Naive thymus-derived CD4-positive, alpha-beta T cell (primary cell): ENCODE measurements at regions of chr6 and their contacts with region 1.

Region 1: DNA sequence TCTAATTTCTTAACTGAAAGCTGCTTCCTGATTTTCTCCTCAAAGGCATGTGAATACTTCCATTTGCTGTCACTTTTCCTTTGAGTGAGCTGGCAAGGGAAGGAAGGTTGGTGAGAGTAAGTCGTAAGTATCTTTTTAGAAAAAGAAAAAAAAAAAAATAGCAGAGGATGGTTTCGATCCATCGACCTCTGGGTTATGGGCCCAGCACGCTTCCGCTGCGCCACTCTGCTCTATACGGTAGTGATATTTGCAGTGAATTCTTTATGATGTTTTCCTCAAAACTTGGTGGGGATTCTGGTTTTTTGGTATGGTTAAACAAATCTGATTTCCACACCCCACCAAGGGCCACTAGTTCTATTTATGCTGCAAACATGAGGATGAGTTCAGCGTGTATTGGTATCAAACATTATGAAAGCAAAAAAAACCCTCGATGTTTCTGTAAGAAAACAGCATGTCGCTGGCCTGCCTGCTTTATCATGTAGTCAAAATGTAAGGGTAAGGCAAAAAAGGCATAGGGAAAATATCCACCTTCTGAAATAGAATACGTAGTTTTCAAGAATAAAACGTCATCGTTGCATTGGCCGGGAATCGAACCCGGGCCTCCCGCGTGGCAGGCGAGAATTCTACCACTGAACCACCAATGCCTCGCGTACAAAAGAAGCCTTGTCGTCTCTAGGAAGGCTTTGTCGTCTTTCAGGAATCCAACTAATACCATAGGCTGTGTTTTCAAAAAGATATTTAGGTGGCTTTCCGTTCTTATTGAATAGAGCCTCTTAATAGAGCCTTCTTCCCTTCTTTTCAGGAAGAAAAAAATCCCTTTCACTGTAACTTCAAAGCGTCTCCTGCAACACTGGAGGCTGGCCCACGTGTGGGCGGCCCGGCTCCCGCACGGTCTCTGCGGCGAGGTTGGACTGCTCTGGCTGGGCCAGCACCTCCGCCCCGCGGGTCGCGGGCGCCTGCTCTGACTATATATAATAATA is 9.6 kb downstream of the OR2B2 start:
- DNase-seq: peak; percentile 75 to 94 (median 90)
- ATAC-seq: peak; percentile 92
- H3K4me3 ChIP-seq: peak overlapping the region; percentile 95
- H3K4me3 Mint-ChIP-seq: peak overlapping the region; percentile 75 to 97 (median 91)
- H3K27ac ChIP-seq: peak overlapping the region; percentile 82
- H3K27ac Mint-ChIP-seq: peak overlapping the region; percentile 95 to 99 (median 99)
- H3K4me1 ChIP-seq: peaks cover 0 to 3% of the 10 kb centered on the region in 2 donors
- H3K4me1 Mint-ChIP-seq: peaks cover 0 to 26% (median 15%) of the 10 kb centered on the region in 7 donors
- H3K27me3 ChIP-seq: no peaks in the 10 kb centered on the region
- H3K27me3 Mint-ChIP-seq: peaks cover 4 to 35% (median 13%) of the 10 kb centered on the region in 5 donors

Region 2: DNA sequence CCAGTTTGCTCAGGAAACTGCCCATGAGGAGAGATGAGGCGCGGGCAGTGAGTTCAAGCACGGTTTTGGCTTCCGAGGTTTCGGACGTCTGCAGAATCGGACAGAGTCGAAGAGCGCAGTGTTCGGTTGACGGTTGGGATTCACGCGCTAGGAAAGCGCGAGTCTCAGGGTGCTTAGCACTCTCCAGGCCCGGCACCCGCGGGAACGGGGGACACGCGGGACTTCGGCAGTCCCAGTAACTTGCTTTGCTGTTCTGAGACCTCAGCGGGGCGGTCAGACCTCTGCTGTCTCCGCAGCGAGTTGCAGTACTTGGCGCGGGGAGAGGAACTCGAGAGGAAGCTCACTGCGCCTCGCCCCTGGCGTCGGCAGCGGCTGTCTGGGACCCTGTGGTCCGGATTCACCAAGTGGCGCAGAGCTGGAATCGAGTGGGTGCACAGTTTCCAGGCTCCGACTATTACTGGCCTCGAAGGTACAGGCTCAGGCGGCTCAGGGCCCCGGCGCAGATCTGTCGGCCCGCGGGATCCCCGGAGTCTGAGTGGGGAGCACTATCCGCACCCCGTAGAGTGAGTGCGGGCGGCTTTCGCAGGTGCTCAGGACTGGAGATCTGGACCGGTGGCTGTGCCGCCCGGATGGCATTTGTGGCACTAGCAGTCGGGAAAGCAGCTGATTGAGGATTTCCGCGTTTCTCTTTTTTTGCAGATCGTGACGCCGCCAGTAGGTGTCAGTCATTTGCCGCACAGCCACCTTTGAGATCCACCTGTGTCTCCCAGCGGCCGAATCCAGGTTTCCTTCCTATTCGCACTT is 590.3 kb before region 1 on chr6 and contains the start of gene POM121L2:
- CTCF ChIA-PET with region 1: no interaction called
- POLR2A ChIA-PET with region 1: no interaction called
- intact Hi-C with region 1: loop called in 1 of 2 experiments (anchors 1 kb)
- DNase-seq: peak in 8 of 9 donors; percentile 26 to 61 (median 56)
- ATAC-seq: peak; percentile 66
- H3K4me3 ChIP-seq: peak within 1 kb of the TSS; percentile 80
- H3K4me3 Mint-ChIP-seq: peak within 1 kb of the TSS; percentile 76 to 86 (median 83)
- H3K27ac ChIP-seq: no peak within 1 kb of the TSS
- H3K27ac Mint-ChIP-seq: peak within 1 kb of the TSS in 2 of 9 donors; percentile 15 to 25
- H3K4me1 ChIP-seq: peaks cover 0 to 6% of the 10 kb centered on the region in 2 donors
- H3K4me1 Mint-ChIP-seq: peaks cover 0 to 13% (median 4%) of the 10 kb centered on the region in 7 donors
- H3K27me3 ChIP-seq: peaks cover 4 to 14% of the 10 kb centered on the region in 2 donors
- H3K27me3 Mint-ChIP-seq: peaks cover 63 to 81% (median 73%) of the 10 kb centered on the region in 5 donors
- total RNA-seq, gene POM121L2: not detected

Region 3: DNA sequence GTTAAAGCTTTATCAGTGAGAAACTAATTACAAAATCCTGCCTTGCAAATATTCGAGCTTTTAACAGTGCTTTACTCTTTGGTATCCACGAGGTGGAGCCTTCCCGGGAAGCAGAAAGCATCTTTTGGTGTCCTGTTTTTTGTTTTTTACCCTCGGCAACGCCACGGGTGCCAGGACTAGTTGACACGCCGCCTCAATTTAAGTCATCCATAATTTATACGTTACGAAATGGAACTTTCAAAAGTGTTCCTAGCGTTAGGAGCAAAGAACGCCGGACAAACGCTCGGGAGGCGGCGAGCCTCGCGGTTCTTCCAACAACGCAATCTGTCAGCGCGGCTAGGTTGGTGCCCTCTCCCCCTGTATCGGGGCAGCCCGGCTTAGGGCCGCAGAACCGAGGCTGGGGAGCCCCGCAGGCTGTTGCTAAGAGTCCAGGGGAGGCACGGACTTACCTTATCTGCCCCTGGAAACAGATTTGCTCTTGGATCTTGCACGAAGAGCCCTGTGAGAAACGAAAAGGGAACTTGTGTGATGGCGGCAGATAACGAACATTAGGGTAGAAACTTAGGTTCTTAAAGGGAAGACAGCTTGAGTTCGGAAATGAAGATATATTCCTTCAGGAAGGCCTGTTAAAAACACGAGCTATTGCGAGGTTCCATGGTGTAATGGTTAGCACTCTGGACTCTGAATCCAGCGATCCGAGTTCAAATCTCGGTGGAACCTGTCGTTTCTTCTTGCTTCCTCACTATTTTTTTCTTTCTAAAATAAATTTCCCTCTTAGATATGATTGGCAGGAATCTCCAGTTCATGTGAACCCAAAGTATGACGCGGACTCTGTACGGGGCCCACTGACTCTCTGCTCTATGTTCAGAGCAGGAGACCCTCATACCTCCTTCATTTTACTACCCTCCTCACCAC is 383.5 kb before region 1 on chr6:
- CTCF ChIA-PET with region 1: no interaction called
- POLR2A ChIA-PET with region 1: no interaction called
- intact Hi-C with region 1: loop called in 1 of 2 experiments (anchors 2 kb)
- DNase-seq: peak; percentile 34 to 79 (median 68)
- ATAC-seq: peak; percentile 81
- H3K4me3 ChIP-seq: peak overlapping the region; percentile 96
- H3K4me3 Mint-ChIP-seq: peak overlapping the region; percentile 84 to 97 (median 91)
- H3K27ac ChIP-seq: peak overlapping the region; percentile 67
- H3K27ac Mint-ChIP-seq: peak overlapping the region; percentile 68 to 94 (median 84)
- H3K4me1 ChIP-seq: peaks cover 7 to 11% of the 10 kb centered on the region in 2 donors
- H3K4me1 Mint-ChIP-seq: peaks cover 0 to 31% (median 18%) of the 10 kb centered on the region in 7 donors
- H3K27me3 ChIP-seq: peaks cover 0 to 3% of the 10 kb centered on the region in 2 donors
- H3K27me3 Mint-ChIP-seq: peaks cover 0 to 40% (median 22%) of the 10 kb centered on the region in 5 donors

Region 4: DNA sequence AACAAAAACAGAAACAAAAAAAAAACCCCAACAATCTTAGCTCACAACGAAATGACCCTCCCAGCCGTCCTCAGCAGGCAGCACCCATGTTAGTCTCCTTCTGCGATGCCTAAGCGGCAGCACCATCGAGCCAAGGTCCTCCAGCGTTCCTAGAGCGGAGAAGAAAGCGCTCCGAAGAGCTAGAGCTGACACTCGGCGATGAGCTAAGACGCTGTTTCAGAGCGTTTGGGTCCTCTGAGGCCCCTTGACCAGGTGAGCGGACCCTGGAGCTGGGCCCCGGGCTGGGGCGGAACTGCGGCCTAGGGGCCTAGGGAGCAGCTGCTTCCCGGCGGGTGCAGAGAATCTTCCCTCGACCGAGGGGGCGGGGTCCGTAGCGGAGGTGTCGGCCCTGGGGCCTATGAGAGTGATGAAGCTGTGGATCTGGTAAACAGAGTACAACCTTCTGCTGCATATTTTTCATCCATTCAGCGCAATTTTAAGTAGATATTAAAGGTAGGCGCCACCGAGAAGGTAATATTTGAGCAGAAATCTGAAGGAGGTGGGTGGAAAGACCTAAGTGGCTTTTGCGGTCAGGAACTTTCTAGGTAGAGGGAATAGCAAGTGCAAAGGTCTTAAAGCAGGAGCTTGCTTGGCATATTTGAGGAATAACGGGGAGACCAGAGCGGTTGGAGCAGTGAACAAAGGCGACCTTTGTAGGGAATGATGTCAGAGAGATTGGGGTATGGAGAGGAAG is 364.5 kb after region 1 on chr6 and contains the start of gene ZSCAN26:
- CTCF ChIA-PET with region 1: no interaction called
- POLR2A ChIA-PET with region 1: no interaction called
- intact Hi-C with region 1: loop called in 1 of 2 experiments (anchors 1 kb)
- DNase-seq: peak; percentile 67 to 91 (median 87)
- ATAC-seq: peak; percentile 96
- H3K4me3 ChIP-seq: peak within 1 kb of the TSS; percentile 96
- H3K4me3 Mint-ChIP-seq: peak within 1 kb of the TSS in 1 of 10 donors; percentile 30
- H3K27ac ChIP-seq: peak within 1 kb of the TSS; percentile 91
- H3K27ac Mint-ChIP-seq: peak within 1 kb of the TSS in 1 of 9 donors; percentile 48
- H3K4me1 ChIP-seq: peaks cover 0 to 24% of the 10 kb centered on the region in 2 donors
- H3K4me1 Mint-ChIP-seq: peaks cover 6 to 37% (median 24%) of the 10 kb centered on the region in 7 donors
- H3K27me3 ChIP-seq: no peaks in the 10 kb centered on the region
- H3K27me3 Mint-ChIP-seq: peaks cover 0 to 7% (median 0%) of the 10 kb centered on the region in 5 donors
- total RNA-seq, gene ZSCAN26: 8.0 to 27.8 (median 12.5) TPM

Region 5: GRCh38 chr6:28940858-28941680 is 1038.4 kb after region 1 on chr6:
- CTCF ChIA-PET with region 1: no interaction called
- POLR2A ChIA-PET with region 1: interaction called, 4 read pairs
- intact Hi-C with region 1: loop called in 1 of 2 experiments (anchors 5 kb)
- DNase-seq: peak; percentile 35 to 90 (median 83)
- ATAC-seq: peak; percentile 76
- H3K4me3 ChIP-seq: peak overlapping the region; percentile 82
- H3K4me3 Mint-ChIP-seq: peak overlapping the region; percentile 86 to 99 (median 92)
- H3K27ac ChIP-seq: peak overlapping the region; percentile 60
- H3K27ac Mint-ChIP-seq: peak overlapping the region; percentile 90 to 99 (median 94)
- H3K4me1 ChIP-seq: peaks cover 22 to 30% of the 10 kb centered on the region in 2 donors
- H3K4me1 Mint-ChIP-seq: peaks cover 34 to 64% (median 56%) of the 10 kb centered on the region in 7 donors
- H3K27me3 ChIP-seq: no peaks in the 10 kb centered on the region
- H3K27me3 Mint-ChIP-seq: peaks cover 0 to 6% (median 0%) of the 10 kb centered on the region in 5 donors